ENCODE measurements at regions of chr2 and their contacts with region 1.

Region 1: DNA sequence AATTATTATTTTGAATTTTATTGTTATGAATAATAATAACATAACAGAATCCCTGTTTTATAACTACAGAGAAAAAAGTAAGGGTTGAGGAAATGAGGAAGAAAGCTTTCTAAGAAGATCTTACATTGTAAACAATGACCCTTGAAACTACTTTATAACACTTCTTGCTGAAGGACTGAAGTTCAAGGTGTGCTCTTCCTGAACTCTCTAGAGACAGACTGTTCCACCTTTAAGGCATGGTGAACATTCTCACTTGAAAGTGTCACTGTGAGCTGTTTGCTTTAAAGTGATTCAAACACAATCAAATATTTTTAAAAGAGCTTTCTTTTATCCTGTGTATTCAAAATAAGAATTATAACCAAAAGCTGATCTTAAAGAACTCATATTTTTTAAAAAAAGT is 131.5 kb downstream of the DNAH7 start:
- DNase-seq: no peak
- H3K4me3 Mint-ChIP-seq: no peak overlapping the region
- H3K27ac Mint-ChIP-seq: no peak overlapping the region
- H3K4me1 Mint-ChIP-seq: no peaks in the 10 kb centered on the region
- H3K27me3 Mint-ChIP-seq: peaks cover 7% of the 10 kb centered on the region

Region 2: DNA sequence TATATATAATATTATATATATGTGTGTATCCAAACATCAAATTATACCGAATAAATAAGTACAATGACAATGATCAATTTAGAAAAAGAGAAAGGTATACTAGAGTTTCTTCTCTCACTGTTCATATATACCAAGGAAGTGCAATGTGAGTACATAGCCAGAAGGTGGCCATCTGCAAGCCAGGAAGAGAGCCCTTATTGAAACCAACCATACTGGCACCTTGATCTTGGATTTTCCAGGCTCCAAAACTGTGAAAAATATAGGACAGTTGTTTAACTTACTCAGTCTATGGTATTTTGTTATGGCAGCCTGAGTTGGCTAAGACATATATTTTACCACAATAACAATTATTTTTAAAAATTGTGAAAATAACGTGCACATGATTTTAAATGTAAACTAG is 1770.4 kb before region 1 on chr2:
- intact Hi-C with region 1: loop called (anchors 2 kb)
- DNase-seq: no peak
- H3K4me3 Mint-ChIP-seq: no peak overlapping the region
- H3K27ac Mint-ChIP-seq: no peak overlapping the region
- H3K4me1 Mint-ChIP-seq: no peaks in the 10 kb centered on the region
- H3K27me3 Mint-ChIP-seq: no peaks in the 10 kb centered on the region

Region 3: DNA sequence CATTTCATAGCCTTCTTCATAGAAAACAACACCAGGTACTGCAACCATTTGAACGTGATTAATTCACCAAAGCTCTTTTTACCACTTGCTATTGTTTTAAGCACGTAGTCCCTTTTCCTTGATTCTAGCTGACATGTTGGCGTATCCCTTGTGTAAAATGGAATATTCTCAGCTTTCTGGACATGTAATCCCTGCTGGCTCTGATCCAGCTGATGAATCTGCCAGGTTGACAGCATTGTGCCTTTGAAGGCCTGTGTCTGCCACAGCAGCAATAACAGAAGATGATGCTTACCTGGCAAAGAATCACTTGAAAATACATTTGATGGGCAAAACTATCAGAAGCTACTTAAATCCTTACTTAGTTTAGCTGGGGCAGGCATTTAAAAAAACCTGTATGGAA is 621.3 kb after region 1 on chr2:
- intact Hi-C with region 1: no loop called
- DNase-seq: no peak
- H3K4me3 Mint-ChIP-seq: no peak overlapping the region
- H3K27ac Mint-ChIP-seq: no peak overlapping the region
- H3K4me1 Mint-ChIP-seq: no peaks in the 10 kb centered on the region
- H3K27me3 Mint-ChIP-seq: peaks cover 3% of the 10 kb centered on the region